Ascending aorta (tissue), 2 donors: ENCODE measurements at regions of chr9 and their contacts with region 1.

Region 1: DNA sequence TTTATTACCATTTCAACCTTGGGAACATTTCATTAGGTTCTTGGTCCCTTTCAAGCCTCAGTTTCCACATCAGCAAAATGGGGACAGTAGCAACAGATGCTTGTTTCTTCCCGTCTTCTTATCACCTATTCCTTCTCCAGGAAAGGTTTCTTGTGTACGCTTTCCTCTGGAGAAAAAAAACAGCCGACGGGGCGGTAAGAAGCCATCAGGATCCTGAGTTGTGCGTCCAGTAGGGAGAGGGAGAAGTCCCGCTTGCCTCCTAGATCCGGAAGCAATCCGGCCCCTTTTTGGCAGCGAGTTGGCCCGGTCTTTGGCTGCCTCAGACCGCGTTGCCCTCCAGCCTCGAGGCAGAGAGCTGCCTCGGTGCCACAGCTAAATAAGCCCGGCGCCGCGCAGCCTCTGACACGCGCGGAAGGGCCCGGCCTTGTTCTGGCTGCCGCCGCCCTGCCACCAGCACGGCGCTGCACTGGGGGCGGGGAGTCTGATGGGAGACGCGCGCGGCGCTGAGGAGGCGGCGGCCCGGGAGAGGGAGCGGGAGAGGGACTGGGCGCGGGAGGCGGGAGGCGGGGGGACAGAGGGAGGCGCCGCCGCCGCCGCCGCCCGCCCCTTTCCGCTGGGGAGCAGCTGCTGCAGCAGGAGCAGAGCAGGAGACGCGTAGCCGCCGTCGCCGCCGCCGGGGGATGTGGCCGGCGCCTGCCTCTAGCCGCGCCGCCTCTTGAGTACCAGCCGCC is at the start of gene SLC44A1:
- DNase-seq: peak; percentile 89 to 98
- H3K4me3 ChIP-seq: peak within 1 kb of the TSS; percentile 96 to 97
- H3K27ac ChIP-seq: peak within 1 kb of the TSS; percentile 78 to 88
- H3K4me1 ChIP-seq: peaks cover 14 to 25% of the 10 kb centered on the region in 2 donors
- H3K27me3 ChIP-seq: no peaks in the 10 kb centered on the region
- CTCF ChIP-seq: no peak
- total RNA-seq, gene SLC44A1: 26.5 TPM

Region 2: DNA sequence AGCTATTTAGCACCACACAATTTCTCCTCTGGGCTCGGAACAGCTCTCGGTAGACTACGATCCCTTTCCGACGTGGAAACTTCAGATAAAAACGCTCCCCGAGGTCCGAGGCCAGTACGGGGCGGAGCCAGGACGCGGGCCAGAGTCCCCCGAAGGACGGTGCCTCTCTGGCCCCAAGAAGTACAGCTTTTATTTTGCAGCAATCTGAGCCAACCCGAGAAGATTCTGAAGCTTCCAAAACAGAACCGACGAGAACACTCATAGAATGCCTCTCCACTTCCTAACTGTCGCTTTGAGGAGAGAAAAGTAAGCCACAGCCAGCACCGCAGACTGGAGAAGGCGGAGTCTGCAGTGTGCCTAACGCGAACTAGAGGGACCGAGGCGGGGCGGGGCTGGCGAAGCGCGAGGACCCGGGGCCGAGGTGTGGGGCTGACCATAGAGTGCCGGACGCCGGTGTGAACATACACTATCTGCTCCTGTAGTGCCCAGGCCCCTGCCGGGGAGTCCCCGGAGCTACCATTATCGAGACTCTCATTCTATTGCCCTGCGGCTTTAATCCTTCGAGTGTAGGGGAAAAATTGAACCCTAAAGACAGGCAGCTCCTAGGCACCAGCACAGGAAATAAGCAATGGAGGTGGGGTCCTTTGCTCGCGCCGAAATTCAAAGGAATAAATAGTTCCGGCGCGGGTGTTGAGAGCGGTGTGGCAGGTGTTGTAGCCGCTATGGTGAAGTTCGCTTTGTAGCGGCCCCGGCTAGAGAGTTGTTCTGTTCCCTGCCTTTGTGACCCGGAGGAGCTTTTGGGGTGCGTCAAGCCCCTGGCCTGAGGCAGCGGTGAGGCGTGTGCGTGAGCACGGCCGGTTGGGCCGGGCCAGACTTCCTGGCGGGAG is 1150.3 kb before region 1 on chr9 and contains the start of gene SMC2:
- intact Hi-C with region 1: loop called (anchors 5 kb)
- DNase-seq: peak; percentile 66 to 95
- H3K4me3 ChIP-seq: peak within 1 kb of the TSS; percentile 59 to 98
- H3K27ac ChIP-seq: peak within 1 kb of the TSS; percentile 88 to 95
- H3K4me1 ChIP-seq: peaks cover 5 to 19% of the 10 kb centered on the region in 2 donors
- H3K27me3 ChIP-seq: no peaks in the 10 kb centered on the region
- CTCF ChIP-seq: no peak
- total RNA-seq, gene SMC2: 2.4 TPM

Region 3: DNA sequence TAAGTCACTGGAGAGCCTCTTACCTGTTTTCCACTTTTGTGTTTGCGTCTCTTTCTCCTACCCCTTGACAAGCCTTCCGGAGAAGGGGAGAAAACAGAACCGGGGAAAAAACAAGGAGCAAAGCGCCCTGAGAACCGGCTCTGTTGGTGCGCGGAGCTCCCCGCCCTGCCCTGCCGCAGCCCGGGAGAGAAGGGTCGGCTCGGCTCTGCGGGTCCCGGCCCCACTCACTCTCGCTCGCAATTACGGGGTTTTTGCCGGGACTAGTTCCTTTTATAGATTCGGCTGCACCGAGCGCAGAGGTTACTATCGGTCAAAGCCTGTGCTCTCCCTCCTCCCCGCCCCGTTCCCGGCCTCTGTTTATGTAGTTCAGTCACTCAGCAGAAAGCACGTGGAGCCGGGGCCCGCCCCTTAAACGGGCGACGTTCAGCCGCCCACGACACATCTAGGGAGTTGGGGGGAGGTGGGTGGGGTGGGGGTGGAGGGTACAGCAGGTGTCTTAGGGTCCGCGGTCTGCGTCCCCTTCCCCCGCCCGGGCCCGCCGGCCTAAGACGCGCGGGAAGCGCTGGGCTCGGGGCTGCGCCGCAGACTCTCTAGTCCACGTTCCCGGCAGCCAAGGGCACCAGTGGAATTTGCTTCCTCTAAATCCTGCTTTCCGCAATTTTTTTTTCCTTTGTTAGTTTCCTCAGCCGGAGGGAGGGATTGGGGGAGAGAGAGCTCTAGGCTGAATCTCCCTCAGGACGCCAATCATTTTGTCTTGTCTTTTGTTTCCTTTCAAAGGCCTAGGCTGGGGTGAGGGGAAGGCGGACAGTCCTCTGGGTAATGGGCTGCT is 316.0 kb before region 1 on chr9 and contains the start of gene ABCA1:
- intact Hi-C with region 1: loop called (anchors 2 kb)
- DNase-seq: peak; percentile 82 to 95
- H3K4me3 ChIP-seq: peak within 1 kb of the TSS; percentile 69 to 90
- H3K27ac ChIP-seq: peak within 1 kb of the TSS; percentile 70 to 81
- H3K4me1 ChIP-seq: peaks cover 0 to 5% of the 10 kb centered on the region in 2 donors
- H3K27me3 ChIP-seq: no peaks in the 10 kb centered on the region
- CTCF ChIP-seq: no peak
- total RNA-seq, gene ABCA1: 14.0 TPM

Region 4: GRCh38 chr9:104991144-104991953 is 252.8 kb before region 1 on chr9:
- intact Hi-C with region 1: loop called (anchors 1 kb)
- DNase-seq: peak; percentile 73 to 95
- H3K4me3 ChIP-seq: peak overlapping the region; percentile 66 to 67
- H3K27ac ChIP-seq: peak overlapping the region; percentile 86 to 96
- H3K4me1 ChIP-seq: peaks cover 9 to 21% of the 10 kb centered on the region in 2 donors
- H3K27me3 ChIP-seq: no peaks in the 10 kb centered on the region
- CTCF ChIP-seq: no peak

Region 5: GRCh38 chr9:105205787-105206495 is 38.2 kb before region 1 on chr9:
- intact Hi-C with region 1: loop called (anchors 1 kb)
- DNase-seq: peak in 1 of 2 donors; percentile 90
- H3K4me3 ChIP-seq: no peak overlapping the region
- H3K27ac ChIP-seq: peak overlapping the region; percentile 90
- H3K4me1 ChIP-seq: peaks cover 4 to 17% of the 10 kb centered on the region in 2 donors
- H3K27me3 ChIP-seq: no peaks in the 10 kb centered on the region
- CTCF ChIP-seq: no peak

Region 6: GRCh38 chr9:105447814-105448812 is 203.9 kb after region 1 on chr9 and contains the start of gene FSD1L:
- intact Hi-C with region 1: loop called (anchors 5 kb)
- DNase-seq: peak; percentile 67 to 94
- H3K4me3 ChIP-seq: peak within 1 kb of the TSS; percentile 77 to 88
- H3K27ac ChIP-seq: peak within 1 kb of the TSS; percentile 59 to 66
- H3K4me1 ChIP-seq: no peaks in the 10 kb centered on the region
- H3K27me3 ChIP-seq: no peaks in the 10 kb centered on the region
- CTCF ChIP-seq: peak in 2 of 3 experiments; percentile 19 to 27
- total RNA-seq, gene FSD1L: 0.43 TPM